Breast epithelium (tissue), 4 donors: ENCODE measurements at regions of chr14 and their contacts with region 1.

Region 1: DNA sequence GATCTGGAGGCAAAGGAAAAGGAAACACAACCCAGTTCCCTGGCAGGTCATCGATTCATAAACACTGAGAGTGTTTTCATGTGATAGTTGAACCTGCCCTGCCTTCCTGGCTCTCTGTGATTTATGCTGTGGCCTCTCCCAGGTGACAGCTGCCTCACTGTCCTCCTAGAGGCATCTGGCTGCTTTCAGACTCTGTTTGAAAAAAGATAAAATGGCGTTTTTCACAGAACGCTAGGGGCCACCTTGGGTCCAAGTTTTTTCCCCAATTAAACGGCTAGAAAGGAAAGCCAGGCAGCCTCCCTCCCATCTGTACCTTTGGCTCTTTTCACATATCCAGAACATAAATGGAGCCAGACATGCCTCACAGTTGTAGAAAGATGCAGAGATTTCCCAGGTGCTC is 252.6 kb upstream of the CCDC196 start:
- DNase-seq: no peak
- H3K4me3 ChIP-seq: no peak overlapping the region
- H3K27ac ChIP-seq: no peak overlapping the region
- H3K4me1 ChIP-seq: no peaks in the 10 kb centered on the region
- H3K27me3 ChIP-seq: no peaks in the 10 kb centered on the region
- CTCF ChIP-seq: no peak
- POLR2A ChIP-seq: no peak

Region 2: GRCh38 chr14:64573109-64573508 is 1660.5 kb before region 1 on chr14:
- intact Hi-C with region 1: loop called (anchors 10 kb)
- DNase-seq: no peak
- H3K4me3 ChIP-seq: no peak overlapping the region
- H3K27ac ChIP-seq: peak overlapping the region in 1 of 2 donors; percentile 42
- H3K4me1 ChIP-seq: no peaks in the 10 kb centered on the region
- H3K27me3 ChIP-seq: no peaks in the 10 kb centered on the region
- CTCF ChIP-seq: no peak
- POLR2A ChIP-seq: no peak

Region 3: GRCh38 chr14:66330219-66330618 is 96.6 kb after region 1 on chr14:
- intact Hi-C with region 1: no loop called
- DNase-seq: no peak
- H3K4me3 ChIP-seq: no peak overlapping the region
- H3K27ac ChIP-seq: no peak overlapping the region
- H3K4me1 ChIP-seq: no peaks in the 10 kb centered on the region
- H3K27me3 ChIP-seq: no peaks in the 10 kb centered on the region
- CTCF ChIP-seq: no peak
- POLR2A ChIP-seq: no peak

Region 4: DNA sequence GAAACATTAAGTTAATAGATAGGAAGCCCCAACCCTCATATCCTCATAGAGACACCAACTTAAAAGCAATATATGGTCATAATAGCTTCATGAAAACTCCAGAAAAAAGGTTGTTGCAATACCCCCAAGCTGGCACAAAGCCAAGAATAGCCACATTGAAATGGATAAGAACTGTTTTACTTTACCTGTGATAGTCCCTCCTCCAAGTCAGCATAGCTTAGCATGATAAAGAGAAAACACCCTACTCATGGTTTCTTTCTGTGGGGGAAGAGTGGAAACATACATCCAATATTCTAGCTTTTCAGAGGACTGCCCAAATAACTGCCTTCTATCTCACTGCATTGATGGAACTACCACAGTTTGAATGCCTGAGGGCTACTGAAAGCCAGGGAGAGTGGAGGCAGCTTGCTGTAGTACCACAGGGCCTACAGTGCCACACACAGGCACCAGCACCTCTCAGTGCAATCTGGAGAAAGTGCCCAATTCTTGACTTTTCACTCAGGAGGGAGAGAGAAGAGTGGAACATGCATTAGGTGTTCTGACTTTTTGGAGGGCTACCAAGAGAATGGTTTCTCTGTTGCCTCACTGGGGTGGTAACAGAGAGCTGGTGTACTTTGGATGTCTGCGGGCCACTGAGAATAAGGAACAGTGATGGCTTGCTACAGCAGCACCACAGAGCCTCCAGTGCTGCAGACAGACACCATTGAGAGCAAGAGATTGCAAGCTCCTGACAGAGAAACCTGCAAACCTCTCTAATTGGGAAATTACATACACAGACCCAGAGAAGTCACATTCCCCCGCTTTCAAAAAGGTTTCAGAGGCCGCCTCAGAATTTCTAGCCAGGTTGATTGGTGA is 798.6 kb after region 1 on chr14:
- intact Hi-C with region 1: no loop called
- DNase-seq: no peak
- H3K4me3 ChIP-seq: no peak overlapping the region
- H3K27ac ChIP-seq: no peak overlapping the region
- H3K4me1 ChIP-seq: no peaks in the 10 kb centered on the region
- H3K27me3 ChIP-seq: no peaks in the 10 kb centered on the region
- CTCF ChIP-seq: no peak
- POLR2A ChIP-seq: no peak